A673 (cell line): ENCODE measurements at regions of chr12 and their contacts with region 1.

Region 1: DNA sequence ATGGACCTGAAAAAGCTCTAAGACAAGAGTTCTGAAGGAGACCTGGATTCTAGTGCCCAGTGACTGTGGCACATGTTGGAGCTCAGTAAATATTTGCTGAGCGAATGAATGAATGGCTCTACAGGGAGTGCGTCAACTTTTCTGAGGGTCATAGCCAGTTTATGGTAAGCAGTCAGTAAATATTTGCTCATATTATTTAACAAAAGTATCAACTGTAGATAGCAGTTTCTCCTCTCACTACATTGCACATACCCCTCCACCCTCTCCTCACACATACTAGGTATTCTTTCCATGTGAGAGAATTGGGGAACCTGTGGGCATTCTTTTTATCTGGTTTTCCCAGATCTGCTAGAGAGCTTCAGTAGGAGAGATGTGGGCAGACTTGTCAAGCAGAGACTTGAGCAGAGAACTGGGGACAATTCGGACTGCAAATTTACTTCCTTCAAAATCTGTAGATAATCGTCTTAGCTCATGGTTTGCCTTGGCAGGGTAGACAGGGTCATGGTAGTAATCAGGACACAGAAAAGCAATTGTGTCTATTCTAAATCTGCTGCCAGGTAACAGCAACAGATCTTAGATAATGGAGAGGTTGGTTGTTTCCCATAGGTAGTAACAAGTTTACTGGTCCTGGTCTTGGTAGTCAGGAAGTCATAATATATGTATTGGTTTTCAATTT is 5.7 kb downstream of the SLC4A8 start:
- DNase-seq: no peak
- H3K4me3 ChIP-seq: no peak overlapping the region
- H3K27ac ChIP-seq: no peak overlapping the region
- H3K4me1 ChIP-seq: no peaks in the 10 kb centered on the region
- H3K27me3 ChIP-seq: peaks cover 1% of the 10 kb centered on the region
- CTCF ChIP-seq: no peak

Region 2: GRCh38 chr12:51482929-51483697 is 52.7 kb after region 1 on chr12:
- CTCF ChIA-PET with region 1: no interaction called
- POLR2A ChIA-PET with region 1: interaction called, 12 read pairs
- intact Hi-C with region 1: no loop called
- DNase-seq: peak; percentile 27
- H3K4me3 ChIP-seq: no peak overlapping the region
- H3K27ac ChIP-seq: no peak overlapping the region
- H3K4me1 ChIP-seq: peaks cover 5% of the 10 kb centered on the region
- H3K27me3 ChIP-seq: no peaks in the 10 kb centered on the region
- CTCF ChIP-seq: no peak; the same call in 1 of the 2 replicates

Region 3: DNA sequence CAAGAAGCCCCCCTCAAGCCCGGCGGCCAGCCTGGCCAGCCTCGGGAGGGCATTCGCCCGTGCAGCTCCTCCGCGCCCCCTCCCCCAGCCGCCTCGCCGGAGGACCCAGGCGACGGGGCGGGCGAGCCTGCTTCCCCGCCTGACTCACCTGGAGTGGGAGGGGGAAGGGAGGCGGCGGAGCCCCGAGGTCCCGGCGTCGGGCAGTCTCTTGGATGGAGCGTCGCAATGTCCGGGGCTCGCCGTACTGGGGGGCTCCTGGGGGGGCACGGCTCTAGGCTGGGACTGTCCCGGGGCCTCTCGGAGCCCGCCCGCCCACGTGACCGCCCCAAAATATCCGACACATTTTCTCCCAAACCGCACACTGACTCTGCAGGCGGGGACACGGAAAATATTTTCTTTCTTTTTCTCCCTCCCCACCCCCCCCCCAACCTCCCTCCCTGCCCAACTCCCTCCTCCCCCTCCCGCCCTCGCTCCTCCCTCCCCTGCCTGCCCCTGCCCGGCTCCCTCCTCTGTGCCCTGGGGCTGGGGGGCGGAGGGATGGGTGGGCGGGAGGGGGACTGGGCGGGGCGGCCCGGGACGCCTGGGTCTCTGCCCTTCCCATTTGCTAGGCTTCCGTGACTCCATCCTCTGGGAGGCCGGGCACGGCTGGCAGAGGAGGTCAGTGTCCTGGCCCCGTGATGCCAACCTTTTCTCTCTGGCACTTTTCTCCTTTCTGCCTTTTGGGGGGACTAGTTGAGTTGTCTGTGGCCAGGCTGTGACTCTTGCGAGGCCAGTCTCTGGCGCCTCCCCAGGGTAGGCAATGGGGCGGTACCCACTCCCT is 1801.7 kb after region 1 on chr12 and contains the start of gene RARG:
- CTCF ChIA-PET with region 1: no interaction called
- POLR2A ChIA-PET with region 1: no interaction called
- intact Hi-C with region 1: no loop called
- DNase-seq: peak; percentile 52
- H3K4me3 ChIP-seq: peak within 1 kb of the TSS; percentile 50
- H3K27ac ChIP-seq: no peak within 1 kb of the TSS
- H3K4me1 ChIP-seq: peaks cover 25% of the 10 kb centered on the region
- H3K27me3 ChIP-seq: no peaks in the 10 kb centered on the region
- CTCF ChIP-seq: no peak
- total RNA-seq, gene RARG: 14.0 and 20.3 TPM in 2 replicates